Activated naive CD4-positive, alpha-beta T cell treated with anti-CD3 and anti-CD28 coated beads, Interleukin-2, amount 10 ng/mL, durations not matched to agents 7 days and 5 days (primary cell): ENCODE measurements at regions of chr17 and their contacts with region 1.

Region 1: DNA sequence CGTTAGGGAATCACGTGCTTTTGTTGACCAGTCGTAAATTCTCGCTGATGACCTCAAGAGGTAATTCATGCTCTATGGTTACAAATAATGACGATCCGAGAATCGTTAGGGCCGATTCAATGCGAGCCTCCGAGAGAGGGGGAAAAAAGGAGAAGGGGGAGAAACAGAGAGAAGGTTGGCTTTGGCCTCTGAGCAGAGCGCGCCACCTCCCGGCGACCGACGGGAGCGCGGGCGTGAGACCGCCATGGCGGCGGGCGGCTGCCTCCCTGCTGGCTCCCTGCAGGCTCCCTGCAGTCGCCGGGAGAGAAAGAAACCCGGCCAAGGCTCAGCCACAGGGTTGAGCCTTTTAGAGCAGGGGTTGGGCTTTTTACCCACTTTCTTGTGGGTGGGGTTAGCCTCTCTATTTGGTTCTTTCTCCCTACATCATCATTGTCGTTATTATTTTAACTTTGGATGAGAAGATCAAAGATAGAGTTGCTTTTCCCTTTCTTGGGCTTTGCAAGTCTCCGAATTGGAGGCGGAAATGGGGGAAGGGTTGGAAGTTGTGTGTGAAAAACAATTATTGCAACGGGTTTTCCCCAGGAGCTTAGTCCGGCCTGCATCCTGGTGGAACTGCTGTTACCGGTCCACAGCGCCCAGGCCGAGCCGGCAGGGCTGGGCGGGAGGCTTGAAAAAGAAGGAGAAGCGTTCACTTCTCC is 410 bp upstream of the HOXB5 start:
- DNase-seq: peak; percentile 84
- H3K4me3 Mint-ChIP-seq: peak overlapping the region; percentile 72
- H3K27ac Mint-ChIP-seq: no peak overlapping the region
- H3K4me1 Mint-ChIP-seq: peaks cover 54% of the 10 kb centered on the region
- H3K27me3 Mint-ChIP-seq: peaks cover 100% of the 10 kb centered on the region

Region 2: DNA sequence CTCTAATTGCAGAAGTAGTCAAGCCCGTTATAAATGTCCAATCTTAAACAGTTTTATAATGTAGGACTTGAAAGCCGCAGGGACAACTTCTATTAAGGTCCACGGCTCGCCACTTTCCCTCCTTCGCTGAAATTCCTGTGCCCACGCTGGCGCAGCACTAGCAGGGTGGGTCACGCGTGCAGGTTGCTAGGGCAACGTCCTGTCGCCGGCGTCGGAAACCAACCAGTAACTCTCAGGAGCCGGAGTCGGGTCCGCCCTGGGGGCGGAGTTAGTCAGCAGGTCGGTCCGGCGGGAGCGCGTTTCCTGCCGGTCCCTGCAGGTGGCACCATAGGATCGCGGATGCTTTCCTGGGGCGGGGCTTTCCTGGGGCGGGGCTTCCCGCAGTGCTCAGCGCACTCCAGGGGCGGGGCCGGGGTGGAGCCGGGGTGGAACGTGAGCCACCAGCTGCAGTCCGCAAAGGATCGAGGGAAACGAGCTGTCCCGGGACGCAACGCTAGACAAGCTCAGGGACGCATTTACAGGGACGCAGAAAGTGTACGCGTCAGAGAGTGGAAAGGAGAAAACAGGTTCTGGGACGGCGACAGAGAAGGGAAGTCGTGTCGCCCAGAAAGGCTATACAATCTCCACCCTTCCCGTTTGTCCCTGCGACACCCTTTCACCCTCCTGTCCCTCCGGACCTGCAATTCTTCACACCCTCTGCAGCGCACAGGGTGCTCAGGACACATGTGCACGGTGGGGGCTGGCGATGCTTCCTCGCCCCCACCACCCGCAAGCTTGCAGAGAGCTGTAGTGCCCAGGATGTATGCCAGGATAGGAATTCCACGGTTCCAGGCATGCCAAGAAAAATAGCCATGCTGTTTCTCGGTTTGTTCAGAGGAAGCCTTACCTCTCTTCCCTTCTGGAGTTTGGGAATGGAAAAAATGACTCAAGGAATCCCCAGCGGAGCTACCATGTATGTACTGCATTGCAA is 568.8 kb before region 1 on chr17:
- CTCF ChIA-PET with region 1: interaction called, 15 read pairs
- DNase-seq: peak; percentile 98
- H3K4me3 Mint-ChIP-seq: peak overlapping the region; percentile 81
- H3K27ac Mint-ChIP-seq: peak overlapping the region; percentile 89
- H3K4me1 Mint-ChIP-seq: peaks cover 42% of the 10 kb centered on the region
- H3K27me3 Mint-ChIP-seq: peaks cover 81% of the 10 kb centered on the region

Region 3: GRCh38 chr17:48259694-48260291 is 334.2 kb before region 1 on chr17:
- CTCF ChIA-PET with region 1: interaction called, 24 read pairs
- DNase-seq: no peak
- H3K4me3 Mint-ChIP-seq: no peak overlapping the region
- H3K27ac Mint-ChIP-seq: no peak overlapping the region
- H3K4me1 Mint-ChIP-seq: no peaks in the 10 kb centered on the region
- H3K27me3 Mint-ChIP-seq: no peaks in the 10 kb centered on the region

Region 4: DNA sequence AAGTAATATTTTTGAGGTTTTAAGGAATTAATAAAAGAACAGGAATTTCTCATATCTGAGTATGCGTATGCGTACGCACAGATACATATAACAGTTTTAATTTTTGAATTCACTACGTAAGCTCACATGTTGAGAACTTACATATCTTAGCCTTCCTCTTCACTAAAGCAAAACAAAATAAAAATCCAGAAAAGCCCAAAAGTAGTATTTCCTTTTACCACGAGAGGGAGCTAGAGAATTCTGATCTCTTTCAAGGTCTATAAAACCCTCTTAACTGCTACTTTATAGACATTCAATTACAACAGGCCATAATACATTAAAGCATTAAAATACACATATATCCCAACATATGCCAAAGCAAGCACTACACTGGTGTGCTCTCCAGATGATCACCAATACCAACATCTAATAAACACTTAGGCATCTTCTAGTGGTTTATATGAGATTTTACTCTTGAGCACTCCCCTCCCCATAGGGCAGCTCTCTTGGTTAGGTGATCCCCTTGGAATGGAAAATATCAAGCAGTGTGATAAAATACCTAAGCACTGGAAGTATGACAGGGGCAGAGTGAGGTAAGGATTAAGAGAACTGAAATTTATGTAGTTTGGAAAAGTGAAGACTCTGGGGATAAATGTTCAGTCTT is 258.0 kb before region 1 on chr17:
- CTCF ChIA-PET with region 1: interaction called, 29 read pairs
- DNase-seq: no peak
- H3K4me3 Mint-ChIP-seq: no peak overlapping the region
- H3K27ac Mint-ChIP-seq: no peak overlapping the region
- H3K4me1 Mint-ChIP-seq: peaks cover 5% of the 10 kb centered on the region
- H3K27me3 Mint-ChIP-seq: no peaks in the 10 kb centered on the region

Region 5: DNA sequence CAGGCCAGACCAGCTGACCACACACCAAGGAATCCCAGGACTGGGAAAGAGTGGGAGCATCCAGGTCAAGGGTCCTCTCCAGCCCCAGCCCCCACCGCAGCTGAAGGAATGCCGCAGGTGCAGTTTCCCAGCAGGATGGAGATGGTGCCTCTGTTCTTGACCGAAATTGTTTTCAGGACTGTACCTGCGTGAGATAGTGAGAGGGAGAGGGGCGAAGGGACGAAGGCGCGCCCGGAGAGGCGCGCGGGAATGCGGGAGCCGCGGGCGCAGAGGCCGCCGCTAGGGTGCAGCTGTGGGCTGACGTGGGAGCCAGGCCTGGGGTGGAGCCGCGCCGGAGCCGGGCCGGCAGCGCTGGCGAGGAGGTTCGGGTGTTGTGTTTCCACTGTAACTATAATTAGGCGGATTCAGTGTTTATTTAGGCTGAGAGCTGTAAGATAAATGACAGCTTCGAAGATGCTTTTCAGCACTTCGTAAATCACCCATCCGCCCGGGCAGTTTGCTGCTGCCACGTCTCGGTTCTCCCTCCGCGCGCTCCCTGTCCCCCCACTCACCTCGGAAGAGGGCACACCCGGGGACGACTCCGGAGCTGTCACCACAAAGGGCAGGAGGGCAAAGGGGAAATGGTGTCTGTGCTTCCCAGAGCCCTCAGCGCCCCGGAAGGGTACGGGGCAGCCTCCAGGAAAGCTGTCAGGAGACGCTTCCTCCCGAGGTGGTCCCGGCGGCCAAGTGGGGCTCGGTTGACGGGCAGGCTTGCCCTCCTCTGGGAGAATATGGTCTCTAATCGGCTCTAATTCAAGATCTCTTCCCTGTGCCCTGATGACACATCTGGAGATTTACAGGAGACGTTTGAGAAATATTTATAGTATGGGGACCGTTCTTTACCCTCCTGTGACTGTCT is 101.3 kb before region 1 on chr17:
- CTCF ChIA-PET with region 1: interaction called, 10 read pairs
- DNase-seq: peak; percentile 79
- H3K4me3 Mint-ChIP-seq: peak overlapping the region; percentile 46
- H3K27ac Mint-ChIP-seq: no peak overlapping the region
- H3K4me1 Mint-ChIP-seq: peaks cover 48% of the 10 kb centered on the region
- H3K27me3 Mint-ChIP-seq: peaks cover 63% of the 10 kb centered on the region